Dorsolateral prefrontal cortex (tissue), 120 donors: ENCODE measurements at regions of chr16 and their contacts with region 1.

Region 1: DNA sequence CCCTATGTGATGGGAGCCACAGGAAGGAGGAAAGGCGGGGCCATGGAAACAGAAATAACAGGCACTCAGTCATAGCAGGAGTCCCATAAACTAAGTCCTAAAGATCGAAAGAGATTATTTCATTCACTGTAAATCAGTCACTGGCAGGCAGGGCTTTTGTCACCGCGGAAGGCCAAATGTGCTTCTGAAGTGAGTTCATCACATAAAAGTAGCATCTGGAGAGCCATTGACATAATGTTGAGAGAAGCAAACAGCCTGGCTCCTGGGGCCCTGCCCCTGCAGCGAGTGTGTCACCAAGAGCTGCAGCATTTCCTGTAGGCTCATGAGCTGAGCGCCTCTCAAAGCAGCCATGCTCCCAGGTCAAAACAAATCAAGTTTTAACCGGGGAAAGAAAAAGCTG is 476.2 kb downstream of the HAPSTR1 start:
- DNase-seq: no peak
- H3K4me3 ChIP-seq: no peak overlapping the region
- H3K27ac ChIP-seq: no peak overlapping the region
- H3K27me3 ChIP-seq: no peaks in the 10 kb centered on the region
- CTCF ChIP-seq: no peak

Region 2: GRCh38 chr16:9518051-9518450 is 49.6 kb before region 1 on chr16:
- intact Hi-C with region 1: loop called in 1 of 2 experiments (anchors 2 kb)
- DNase-seq: no peak
- H3K4me3 ChIP-seq: no peak overlapping the region
- H3K27ac ChIP-seq: no peak overlapping the region
- H3K27me3 ChIP-seq: no peaks in the 10 kb centered on the region
- CTCF ChIP-seq: no peak

Region 3: GRCh38 chr16:9630119-9630518 is 62.5 kb after region 1 on chr16:
- intact Hi-C with region 1: no loop called
- DNase-seq: no peak
- H3K4me3 ChIP-seq: no peak overlapping the region
- H3K27ac ChIP-seq: no peak overlapping the region
- H3K27me3 ChIP-seq: no peaks in the 10 kb centered on the region
- CTCF ChIP-seq: no peak